ENCODE measurements at regions of chr17 and their contacts with region 1.

Region 1: DNA sequence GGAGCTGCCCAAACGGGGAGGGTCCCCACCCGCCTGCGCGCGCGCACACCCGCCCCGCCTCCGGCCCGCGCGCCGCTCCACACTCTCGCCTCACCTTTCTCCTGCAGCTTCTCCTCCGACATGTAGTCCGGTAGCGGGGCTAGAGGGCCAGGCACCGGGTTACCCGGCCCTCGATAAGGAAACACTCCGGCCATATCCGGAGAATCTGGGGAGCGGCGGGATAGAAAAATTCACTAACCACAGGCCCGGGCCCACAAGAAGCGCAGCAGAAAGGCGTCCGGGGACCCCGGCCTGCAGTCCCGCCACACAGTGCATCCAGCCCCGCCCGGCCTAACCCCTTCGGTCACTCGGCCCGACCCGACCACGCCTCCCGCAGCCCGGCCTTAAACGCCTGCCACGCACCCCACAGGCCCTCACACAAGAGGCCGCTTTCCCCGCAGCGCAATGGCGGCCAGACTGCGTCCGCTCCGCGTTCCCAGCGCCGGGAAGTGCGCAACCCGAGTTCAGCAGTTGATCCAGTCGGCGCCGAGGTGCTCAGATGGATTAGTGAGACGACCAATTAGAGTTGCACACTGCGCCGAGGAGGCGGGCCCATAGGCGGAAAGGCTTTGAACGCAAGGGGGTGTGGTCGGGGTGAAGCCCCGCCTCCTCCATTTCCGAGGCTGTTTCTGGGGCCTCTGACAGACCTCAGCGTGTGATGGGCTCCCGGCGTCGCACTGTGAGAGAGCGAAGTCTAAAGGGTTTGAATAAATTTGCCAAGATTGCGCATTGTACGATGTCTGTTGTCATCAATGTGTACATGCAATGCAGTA is at the start of gene PRPF8:
- DNase-seq: peak; percentile 99
- H3K4me3 ChIP-seq: peak within 1 kb of the TSS; percentile 82 to 97 (median 90)
- H3K27ac ChIP-seq: peak within 1 kb of the TSS; percentile 91 to 98 (median 96)
- H3K4me1 ChIP-seq: peaks cover 0 to 28% (median 26%) of the 10 kb centered on the region in 4 donors
- H3K27me3 ChIP-seq: no peaks in the 10 kb centered on the region
- CTCF ChIP-seq: no peak
- EP300 ChIP-seq: no peak
- POLR2A ChIP-seq: peak; percentile 98
- total RNA-seq, gene PRPF8: 115 to 155 (median 125) TPM

Region 2: GRCh38 chr17:1709971-1710806 is 25.6 kb after region 1 on chr17 and contains the start of gene TLCD2:
- intact Hi-C with region 1: loop called (anchors 2 kb)
- DNase-seq: peak; percentile 91
- H3K4me3 ChIP-seq: peak within 1 kb of the TSS; percentile 63 to 91 (median 64)
- H3K27ac ChIP-seq: peak within 1 kb of the TSS; percentile 76 to 85 (median 82)
- H3K4me1 ChIP-seq: peaks cover 0 to 42% (median 34%) of the 10 kb centered on the region in 4 donors
- H3K27me3 ChIP-seq: no peaks in the 10 kb centered on the region
- CTCF ChIP-seq: no peak
- EP300 ChIP-seq: no peak
- POLR2A ChIP-seq: peak; percentile 27 to 58
- total RNA-seq, gene TLCD2: 2.6 to 5.4 (median 4.1) TPM

Region 3: DNA sequence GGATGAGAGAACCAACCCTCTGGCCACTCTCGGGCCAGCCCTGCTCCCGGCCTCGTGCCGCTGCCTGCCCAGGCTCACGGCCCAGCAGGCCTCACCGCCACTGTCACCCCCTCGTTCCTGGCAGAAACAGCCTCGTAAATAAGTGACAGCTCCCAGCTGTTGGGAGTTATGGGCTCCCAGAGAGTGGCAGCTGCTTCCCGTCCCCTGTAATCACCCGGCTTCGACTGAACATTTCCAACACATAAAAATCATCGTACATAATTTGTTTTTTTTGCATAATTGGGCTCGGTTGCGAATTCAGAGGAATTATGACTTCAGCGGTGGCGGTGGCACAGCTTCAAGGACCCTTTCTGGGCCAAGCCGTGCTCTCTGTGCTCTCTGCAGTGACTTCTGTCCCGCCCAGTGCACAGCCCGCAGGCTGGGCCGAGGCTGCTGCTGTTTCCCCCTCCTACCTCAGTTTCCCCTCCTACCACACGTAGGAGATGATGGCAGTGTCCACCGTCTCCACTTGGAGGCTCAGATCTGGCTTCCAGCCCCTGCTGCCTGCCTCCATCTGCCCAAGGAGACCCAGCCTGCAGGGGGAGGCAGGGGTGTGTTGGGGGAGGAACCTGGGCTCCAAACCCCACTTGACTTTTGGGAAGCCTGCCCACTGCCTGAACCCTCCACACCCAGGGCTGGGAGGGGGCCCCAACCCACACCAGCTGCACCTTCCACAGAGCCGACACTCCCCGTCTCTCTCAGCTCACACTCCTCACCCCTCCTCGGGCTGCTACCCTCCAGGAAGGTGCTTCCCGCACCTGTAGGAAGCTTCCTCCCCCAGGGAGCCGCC is 255.6 kb after region 1 on chr17:
- intact Hi-C with region 1: no loop called
- DNase-seq: no peak
- H3K4me3 ChIP-seq: no peak overlapping the region
- H3K27ac ChIP-seq: no peak overlapping the region
- H3K4me1 ChIP-seq: peaks cover 0 to 12% (median 0%) of the 10 kb centered on the region in 4 donors
- H3K27me3 ChIP-seq: peaks cover 0 to 13% (median 0%) of the 10 kb centered on the region in 3 donors
- CTCF ChIP-seq: no peak
- EP300 ChIP-seq: no peak
- POLR2A ChIP-seq: no peak